Aorta (tissue), 5 donors: ENCODE measurements at regions of chr1 and their contacts with region 1.

Region 1: GRCh38 chr1:167936068-167936929 is at the start of gene DCAF6:
- DNase-seq: peak; percentile 98
- ATAC-seq: peak; percentile 98
- H3K4me3 ChIP-seq: peak within 1 kb of the TSS; percentile 84 to 94
- H3K27ac ChIP-seq: peak within 1 kb of the TSS; percentile 62 to 91
- H3K4me1 ChIP-seq: no peaks in the 10 kb centered on the region
- H3K27me3 ChIP-seq: no peaks in the 10 kb centered on the region
- total RNA-seq, gene DCAF6: 55.5 to 68.7 TPM

Region 2: GRCh38 chr1:167584581-167584980 is 351.7 kb before region 1 on chr1:
- intact Hi-C with region 1: no loop called
- DNase-seq: no peak
- ATAC-seq: no peak
- H3K4me3 ChIP-seq: no peak overlapping the region
- H3K27ac ChIP-seq: no peak overlapping the region
- H3K4me1 ChIP-seq: no peaks in the 10 kb centered on the region
- H3K27me3 ChIP-seq: no peaks in the 10 kb centered on the region

Region 3: DNA sequence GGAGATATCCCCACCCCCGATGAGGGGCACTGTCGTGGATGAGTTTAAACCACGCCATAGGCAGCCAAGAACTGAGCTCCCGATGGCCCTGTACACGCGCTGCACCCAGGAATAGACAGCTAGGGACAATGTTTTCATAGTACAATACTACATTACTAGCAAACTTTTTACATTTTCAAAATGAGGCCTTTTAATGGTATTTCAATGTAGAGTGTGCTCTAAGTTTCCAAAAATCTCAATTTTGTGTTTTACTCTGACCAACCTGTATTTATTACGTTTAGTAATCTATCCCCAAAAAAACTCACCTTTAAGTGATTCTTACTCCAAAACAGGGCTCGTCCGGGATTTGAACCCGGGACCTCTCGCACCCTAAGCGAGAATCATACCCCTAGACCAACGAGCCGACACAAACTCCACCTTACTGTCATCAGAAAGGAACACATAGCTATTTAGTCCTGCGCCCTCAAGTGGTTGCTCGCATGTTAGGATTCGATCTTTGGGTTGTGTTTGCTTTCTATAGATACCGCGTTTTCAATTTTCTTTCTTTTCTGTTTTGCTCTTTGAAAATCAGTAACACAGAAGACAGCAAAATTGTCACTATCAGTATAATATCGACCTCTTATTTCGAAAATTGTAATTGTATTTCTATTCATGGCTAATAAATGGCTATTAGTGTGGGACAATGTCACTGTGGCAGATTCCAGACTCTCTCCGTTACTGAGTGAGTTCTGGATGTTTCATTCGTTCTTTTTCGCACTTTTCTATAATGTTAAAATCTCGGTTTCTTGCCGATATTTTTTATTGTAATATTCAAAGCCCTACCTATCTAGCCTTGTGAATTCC is 220.9 kb before region 1 on chr1:
- intact Hi-C with region 1: loop called (anchors 5 to 10 kb)
- DNase-seq: peak; percentile 85 to 91
- ATAC-seq: peak; percentile 90
- H3K4me3 ChIP-seq: peak overlapping the region; percentile 59 to 92
- H3K27ac ChIP-seq: peak overlapping the region in 1 of 2 donors; percentile 55
- H3K4me1 ChIP-seq: no peaks in the 10 kb centered on the region
- H3K27me3 ChIP-seq: no peaks in the 10 kb centered on the region

Region 4: DNA sequence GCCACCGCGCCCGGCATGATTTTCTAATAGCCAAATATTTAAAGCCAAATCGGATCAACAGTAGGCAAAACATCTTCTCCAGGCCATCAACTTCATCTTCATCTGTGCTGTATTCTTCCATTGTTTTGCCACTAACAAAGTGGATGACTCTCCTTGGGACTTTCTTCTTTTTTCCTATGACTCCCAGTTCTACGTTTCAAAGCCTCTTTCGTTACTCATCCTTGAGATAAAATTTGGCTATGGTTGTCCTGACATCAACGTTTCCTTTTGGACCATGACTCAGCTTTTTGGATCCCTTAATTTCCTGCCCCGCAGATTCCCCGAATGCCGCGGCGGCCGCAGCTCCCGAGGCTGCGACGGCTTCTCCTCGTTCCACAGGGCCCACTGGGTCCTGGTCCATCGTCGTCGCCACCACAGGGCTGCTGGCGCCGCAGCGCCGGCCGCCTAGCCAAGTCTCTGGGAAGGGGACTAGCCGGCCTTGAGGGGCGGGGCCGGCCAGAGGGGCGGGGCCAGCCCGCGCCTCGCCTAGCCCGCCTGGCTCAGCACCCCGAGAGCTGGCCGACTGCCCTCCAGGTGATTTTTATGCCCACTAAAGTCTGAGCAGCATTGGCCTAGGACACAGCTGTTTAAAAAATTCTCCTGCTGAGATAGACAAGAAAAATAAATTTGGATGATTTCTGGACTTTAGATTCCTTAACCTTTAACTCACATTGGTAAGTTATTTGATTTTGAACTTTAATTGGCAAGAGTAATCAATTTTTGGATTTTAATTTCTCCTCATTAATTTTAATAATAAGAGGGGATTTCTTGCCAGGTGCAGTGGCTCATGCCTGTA is 116.2 kb before region 1 on chr1:
- intact Hi-C with region 1: loop called in 1 of 2 experiments (anchors 5 kb)
- DNase-seq: peak; percentile 92 to 95
- ATAC-seq: peak; percentile 95
- H3K4me3 ChIP-seq: peak overlapping the region in 1 of 2 donors; percentile 63
- H3K27ac ChIP-seq: peak overlapping the region in 1 of 2 donors; percentile 66
- H3K4me1 ChIP-seq: no peaks in the 10 kb centered on the region
- H3K27me3 ChIP-seq: no peaks in the 10 kb centered on the region

Region 5: GRCh38 chr1:168082008-168082876 is 145.9 kb after region 1 on chr1:
- intact Hi-C with region 1: loop called in 1 of 2 experiments (anchors 2 kb)
- DNase-seq: peak; percentile 80 to 85
- ATAC-seq: peak; percentile 77
- H3K4me3 ChIP-seq: no peak overlapping the region
- H3K27ac ChIP-seq: no peak overlapping the region
- H3K4me1 ChIP-seq: peaks cover 0 to 1% of the 10 kb centered on the region in 2 donors
- H3K27me3 ChIP-seq: no peaks in the 10 kb centered on the region